IMR-90 (cell line): ENCODE measurements at regions of chr2 and their contacts with region 1.

Region 1: GRCh38 chr2:29923110-29923721 is 1.8 kb upstream of the ALK start:
- DNase-seq: peak; percentile 54
- ATAC-seq: peak; percentile 50; the same call in 1 of the 2 replicates
- H3K4me3 ChIP-seq: no peak overlapping the region
- H3K27ac ChIP-seq: no peak overlapping the region
- H3K4me1 ChIP-seq: no peaks in the 10 kb centered on the region
- H3K27me3 ChIP-seq: peaks cover 28% of the 10 kb centered on the region
- CTCF ChIP-seq: peak; percentile 79
- POLR2A ChIP-seq: no peak
- RAD21 ChIP-seq: peak; percentile 56

Region 2: GRCh38 chr2:28247290-28247689 is 1675.9 kb before region 1 on chr2:
- CTCF ChIA-PET with region 1: no interaction called
- POLR2A ChIA-PET with region 1: no interaction called
- dilution Hi-C with region 1: no loop called
- in situ Hi-C with region 1: no loop called
- intact Hi-C with region 1: no loop called
- DNase-seq: no peak
- ATAC-seq: no peak
- H3K4me3 ChIP-seq: no peak overlapping the region
- H3K27ac ChIP-seq: no peak overlapping the region
- H3K4me1 ChIP-seq: peaks cover 2% of the 10 kb centered on the region; the same call in 1 of the 2 replicates
- H3K27me3 ChIP-seq: no peaks in the 10 kb centered on the region
- CTCF ChIP-seq: no peak
- POLR2A ChIP-seq: no peak
- RAD21 ChIP-seq: no peak

Region 3: GRCh38 chr2:29295857-29296256 is 627.4 kb before region 1 on chr2:
- CTCF ChIA-PET with region 1: interaction called, 3 read pairs
- POLR2A ChIA-PET with region 1: no interaction called
- dilution Hi-C with region 1: no loop called
- in situ Hi-C with region 1: no loop called
- intact Hi-C with region 1: loop called (anchors 10 kb)
- DNase-seq: peak; percentile 26
- ATAC-seq: peak; percentile 65
- H3K4me3 ChIP-seq: no peak overlapping the region
- H3K27ac ChIP-seq: no peak overlapping the region
- H3K4me1 ChIP-seq: no peaks in the 10 kb centered on the region
- H3K27me3 ChIP-seq: peaks cover 5% of the 10 kb centered on the region; the same call in 1 of the 2 replicates
- CTCF ChIP-seq: peak; percentile 41
- POLR2A ChIP-seq: no peak
- RAD21 ChIP-seq: peak; percentile 60

Region 4: DNA sequence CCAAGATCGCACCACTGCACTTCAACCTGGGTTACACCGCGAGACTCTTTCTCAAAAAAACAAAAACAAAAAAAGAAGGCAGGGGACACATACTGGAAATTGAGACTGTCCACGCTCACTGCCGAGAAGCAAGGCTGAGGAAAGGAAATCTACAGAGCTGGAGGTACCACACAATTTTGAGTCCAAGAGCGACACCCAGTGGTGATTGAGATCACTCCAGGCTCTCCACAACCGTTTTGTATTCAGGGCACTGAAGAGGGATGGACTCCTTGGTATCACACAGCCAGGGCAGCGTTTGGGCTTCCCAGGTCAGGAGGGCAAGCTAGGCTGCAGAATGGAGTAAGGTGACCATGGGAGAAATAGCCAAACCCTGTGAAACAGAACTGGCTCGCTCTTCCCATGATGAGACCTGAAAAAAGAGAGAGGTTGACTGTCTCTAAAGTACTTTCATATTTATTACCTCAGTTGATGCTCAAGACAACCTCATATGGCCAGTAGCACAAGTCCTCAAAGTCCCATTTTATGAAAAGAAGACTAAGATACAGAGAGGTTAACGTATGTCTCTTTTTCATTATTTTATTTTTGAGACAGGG is 149.1 kb after region 1 on chr2:
- CTCF ChIA-PET with region 1: no interaction called
- POLR2A ChIA-PET with region 1: no interaction called
- dilution Hi-C with region 1: no loop called
- in situ Hi-C with region 1: no loop called
- intact Hi-C with region 1: loop called (anchors 1 kb)
- DNase-seq: peak; percentile 72
- ATAC-seq: peak; percentile 96
- H3K4me3 ChIP-seq: no peak overlapping the region
- H3K27ac ChIP-seq: no peak overlapping the region
- H3K4me1 ChIP-seq: no peaks in the 10 kb centered on the region
- H3K27me3 ChIP-seq: peaks cover 21% of the 10 kb centered on the region
- CTCF ChIP-seq: peak; percentile 78
- POLR2A ChIP-seq: no peak
- RAD21 ChIP-seq: peak; percentile 77

Region 5: GRCh38 chr2:30115141-30115980 is 192.1 kb after region 1 on chr2:
- CTCF ChIA-PET with region 1: no interaction called
- POLR2A ChIA-PET with region 1: no interaction called
- dilution Hi-C with region 1: no loop called
- in situ Hi-C with region 1: loop called (anchors 10 kb)
- intact Hi-C with region 1: loop called (anchors 2 kb)
- DNase-seq: peak; percentile 82
- ATAC-seq: peak; percentile 81
- H3K4me3 ChIP-seq: no peak overlapping the region
- H3K27ac ChIP-seq: no peak overlapping the region
- H3K4me1 ChIP-seq: peaks cover 13% of the 10 kb centered on the region
- H3K27me3 ChIP-seq: peaks cover 11% of the 10 kb centered on the region
- CTCF ChIP-seq: peak; percentile 96
- POLR2A ChIP-seq: no peak
- RAD21 ChIP-seq: peak; percentile 93